ENCODE measurements at regions of chr7 and their contacts with region 1.

Region 1: DNA sequence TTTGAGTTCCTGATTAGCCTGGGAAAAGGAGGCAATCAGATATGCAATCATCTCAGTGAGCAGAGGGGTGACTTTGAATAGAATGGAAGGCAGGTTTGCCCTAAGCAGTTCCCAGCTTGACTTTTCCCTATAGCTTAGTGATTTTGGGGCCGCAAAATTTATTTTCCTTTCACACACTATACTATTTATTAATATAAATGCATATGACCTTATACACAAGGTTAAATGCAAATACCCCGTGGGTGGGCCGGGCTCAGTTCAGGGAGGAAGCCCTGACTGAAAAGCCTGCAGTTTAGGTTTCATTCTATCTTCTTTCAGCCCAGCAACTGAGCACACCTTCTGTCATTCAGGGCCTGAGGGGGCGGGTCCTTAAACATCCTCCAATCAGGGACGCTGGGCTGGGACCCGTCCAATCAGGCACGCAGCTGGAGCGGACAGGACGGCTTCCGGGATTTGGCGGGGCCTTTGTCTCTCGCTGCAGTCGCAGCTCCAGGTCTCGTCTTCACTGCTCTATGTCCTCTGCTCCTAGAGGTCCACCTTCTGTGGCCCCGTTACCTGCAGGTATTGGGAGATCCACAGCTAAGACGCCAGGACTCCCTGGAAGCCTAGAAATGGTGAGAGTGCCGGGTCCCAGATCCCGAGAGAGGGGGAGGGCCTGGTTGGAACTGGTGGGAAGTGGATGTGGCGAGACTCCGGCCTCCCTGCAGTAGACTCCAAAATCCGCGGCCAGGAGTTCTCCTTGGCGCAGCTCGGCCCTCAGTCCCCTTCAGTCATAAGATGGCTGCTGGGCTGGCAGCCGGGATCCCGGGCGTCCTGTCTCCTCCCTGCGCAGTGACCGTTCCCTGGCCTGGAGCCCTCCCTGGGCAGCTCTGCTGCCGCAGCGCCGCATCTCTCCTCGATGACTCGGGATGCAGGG is at the start of gene ZNF273:
- DNase-seq: peak; percentile 96
- H3K4me3 Mint-ChIP-seq: peak within 1 kb of the TSS; percentile 96
- H3K27ac Mint-ChIP-seq: peak within 1 kb of the TSS; percentile 98
- H3K4me1 Mint-ChIP-seq: peaks cover 42% of the 10 kb centered on the region
- H3K27me3 Mint-ChIP-seq: no peaks in the 10 kb centered on the region
- total RNA-seq, gene ZNF273: 9.7 to 11.7 TPM

Region 2: DNA sequence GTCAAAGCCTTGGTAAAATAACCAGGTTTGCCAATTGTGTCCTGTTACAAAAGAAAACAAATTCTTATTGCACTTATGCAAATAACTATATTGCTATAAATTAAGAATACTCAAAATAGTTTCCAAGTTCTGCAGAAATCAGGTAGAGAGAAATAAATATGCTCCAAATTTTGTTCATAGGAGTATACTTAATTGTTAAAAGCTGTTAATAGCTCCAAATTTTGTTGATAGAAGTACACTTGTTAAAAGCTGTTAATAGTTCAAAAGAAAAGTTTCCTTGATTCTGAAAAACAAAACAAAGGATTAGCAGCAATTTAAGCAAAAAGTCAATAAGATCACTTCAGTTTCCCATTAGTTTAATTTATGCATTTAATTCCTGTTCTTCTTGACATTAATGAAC is 155.3 kb before region 1 on chr7:
- CTCF ChIA-PET with region 1: no interaction called
- POLR2A ChIA-PET with region 1: no interaction called
- DNase-seq: no peak
- H3K4me3 Mint-ChIP-seq: no peak overlapping the region
- H3K27ac Mint-ChIP-seq: no peak overlapping the region
- H3K4me1 Mint-ChIP-seq: no peaks in the 10 kb centered on the region
- H3K27me3 Mint-ChIP-seq: no peaks in the 10 kb centered on the region

Region 3: GRCh38 chr7:64802699-64803098 is 100.4 kb before region 1 on chr7:
- CTCF ChIA-PET with region 1: no interaction called
- POLR2A ChIA-PET with region 1: interaction called, 12 read pairs
- DNase-seq: no peak
- H3K4me3 Mint-ChIP-seq: no peak overlapping the region
- H3K27ac Mint-ChIP-seq: no peak overlapping the region
- H3K4me1 Mint-ChIP-seq: peaks cover 7% of the 10 kb centered on the region
- H3K27me3 Mint-ChIP-seq: no peaks in the 10 kb centered on the region

Region 4: DNA sequence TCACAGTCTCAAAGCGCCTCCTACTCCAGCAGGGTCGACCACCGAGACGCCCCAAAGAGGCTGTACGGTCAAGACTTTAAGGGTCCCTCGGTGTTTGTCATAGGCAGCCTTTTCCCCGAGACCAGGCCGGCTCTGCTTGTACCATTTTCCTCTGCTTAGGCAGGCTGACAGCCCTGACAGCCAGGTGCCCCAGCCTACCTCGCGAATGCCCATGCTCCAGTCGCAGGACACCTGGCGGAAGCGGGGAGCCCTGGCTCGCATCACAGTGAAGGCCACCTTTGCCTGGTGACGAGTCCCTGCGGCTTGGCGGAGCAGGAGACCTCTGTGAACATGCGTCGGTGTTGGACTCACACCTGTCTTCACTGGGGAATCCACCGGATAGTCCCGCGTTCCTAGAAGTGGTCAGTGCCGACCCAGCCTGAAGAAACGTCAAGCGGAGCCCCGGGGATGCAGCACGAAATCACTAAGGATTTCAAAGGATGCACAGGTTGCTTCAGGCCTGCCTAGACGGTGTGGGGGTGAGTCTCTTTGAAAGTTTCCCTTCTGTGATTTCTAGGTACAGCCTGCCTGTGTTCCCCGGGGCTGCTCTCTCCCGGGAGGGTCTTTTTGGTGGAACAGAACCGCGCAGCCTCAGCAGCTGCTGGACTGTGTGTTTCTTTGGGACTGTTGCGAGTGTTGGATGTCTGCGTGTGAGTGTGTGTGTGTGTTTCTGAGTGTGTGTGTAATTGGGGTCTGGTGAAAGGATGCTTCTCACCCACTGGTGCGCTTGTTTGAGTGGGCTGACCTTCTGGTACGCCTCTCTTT is 30.5 kb before region 1 on chr7:
- CTCF ChIA-PET with region 1: no interaction called
- POLR2A ChIA-PET with region 1: no interaction called
- DNase-seq: no peak
- H3K4me3 Mint-ChIP-seq: no peak overlapping the region
- H3K27ac Mint-ChIP-seq: no peak overlapping the region
- H3K4me1 Mint-ChIP-seq: peaks cover 5% of the 10 kb centered on the region
- H3K27me3 Mint-ChIP-seq: no peaks in the 10 kb centered on the region

Region 5: GRCh38 chr7:64914557-64914956 is 11.5 kb after region 1 on chr7:
- CTCF ChIA-PET with region 1: no interaction called
- POLR2A ChIA-PET with region 1: no interaction called
- DNase-seq: no peak
- H3K4me3 Mint-ChIP-seq: no peak overlapping the region
- H3K27ac Mint-ChIP-seq: no peak overlapping the region
- H3K4me1 Mint-ChIP-seq: no peaks in the 10 kb centered on the region
- H3K27me3 Mint-ChIP-seq: no peaks in the 10 kb centered on the region

Region 6: GRCh38 chr7:64959072-64959747 is 56.1 kb after region 1 on chr7:
- CTCF ChIA-PET with region 1: no interaction called
- POLR2A ChIA-PET with region 1: no interaction called
- DNase-seq: no peak
- H3K4me3 Mint-ChIP-seq: no peak overlapping the region
- H3K27ac Mint-ChIP-seq: no peak overlapping the region
- H3K4me1 Mint-ChIP-seq: no peaks in the 10 kb centered on the region
- H3K27me3 Mint-ChIP-seq: no peaks in the 10 kb centered on the region

Measured in activated CD4-positive, alpha-beta T cell treated with anti-CD3 and anti-CD28 coated beads, Interleukin-2, amount 10 ng/mL, durations not matched to agents 7 days and 5 days (primary cell).